ENCODE measurements at regions of chr18 and their contacts with region 1.

Region 1: DNA sequence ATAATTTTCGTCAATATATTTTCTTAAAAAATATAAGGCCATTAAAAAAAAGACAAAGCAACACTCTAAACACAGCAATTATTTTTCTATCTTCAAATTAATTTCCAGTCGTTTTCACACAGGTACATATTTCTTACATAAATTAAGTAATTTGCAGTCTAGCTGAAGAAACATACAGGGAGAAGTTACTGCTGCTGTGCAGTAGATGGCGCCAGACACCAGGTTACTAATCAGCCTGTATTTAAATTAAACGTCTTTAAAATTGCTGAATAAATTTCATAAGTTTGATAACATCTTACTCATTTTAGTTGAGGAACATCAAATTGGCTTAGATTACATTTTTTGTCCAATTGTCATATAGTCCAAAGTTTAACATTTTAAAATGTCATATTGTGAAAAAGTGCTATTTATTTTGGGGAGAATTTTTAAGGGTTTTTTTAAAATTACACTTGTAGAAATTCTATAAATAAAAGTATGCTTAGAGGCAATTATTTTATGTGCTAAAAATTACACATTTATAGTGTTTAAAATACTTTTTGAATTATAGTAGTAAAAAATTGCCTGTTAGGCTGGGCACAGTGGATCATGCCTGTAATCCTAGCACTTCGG is 88.4 kb downstream of the PMAIP1 start:
- DNase-seq: peak; percentile 9
- H3K4me3 ChIP-seq: no peak overlapping the region
- CTCF ChIP-seq: peak; percentile 75

Region 2: GRCh38 chr18:59837586-59837985 is 150.6 kb before region 1 on chr18:
- CTCF ChIA-PET with region 1: interaction called, 13 read pairs
- POLR2A ChIA-PET with region 1: no interaction called
- DNase-seq: no peak
- H3K4me3 ChIP-seq: no peak overlapping the region
- CTCF ChIP-seq: peak; percentile 79

Region 3: GRCh38 chr18:60090170-60090569 is 102.0 kb after region 1 on chr18:
- CTCF ChIA-PET with region 1: no interaction called
- POLR2A ChIA-PET with region 1: no interaction called
- DNase-seq: no peak
- H3K4me3 ChIP-seq: no peak overlapping the region
- CTCF ChIP-seq: no peak

Region 4: GRCh38 chr18:60130284-60130683 is 142.1 kb after region 1 on chr18:
- CTCF ChIA-PET with region 1: no interaction called
- POLR2A ChIA-PET with region 1: no interaction called
- DNase-seq: no peak
- H3K4me3 ChIP-seq: no peak overlapping the region
- CTCF ChIP-seq: no peak

Region 5: GRCh38 chr18:60549338-60549960 is 561.2 kb after region 1 on chr18:
- CTCF ChIA-PET with region 1: interaction called, 138 read pairs
- POLR2A ChIA-PET with region 1: no interaction called
- DNase-seq: peak; percentile 53
- H3K4me3 ChIP-seq: no peak overlapping the region
- CTCF ChIP-seq: peak; percentile 60

Measured in AG04449 (cell line).